Common myeloid progenitor, CD34-positive (primary cell): ENCODE measurements at regions of chr5 and their contacts with region 1.

Region 1: DNA sequence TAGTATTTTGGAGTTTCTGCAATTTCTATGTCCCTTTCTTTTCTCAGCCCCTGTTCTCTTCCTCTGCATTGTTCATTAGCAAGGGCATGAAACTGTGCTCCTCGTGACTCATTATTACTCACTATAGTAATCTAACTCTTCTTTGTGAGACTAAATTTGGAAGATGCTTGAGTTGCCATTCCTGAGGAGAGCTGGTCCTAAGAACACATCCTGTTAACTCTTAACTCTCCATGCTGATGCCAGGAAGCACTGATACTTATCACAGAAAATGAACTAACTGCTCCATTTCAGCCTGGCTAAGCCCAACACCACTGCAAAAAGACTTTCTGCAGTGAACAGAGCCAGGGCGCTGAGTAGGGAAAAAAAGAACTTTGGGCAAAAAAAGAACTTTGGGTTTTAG is 10.6 kb upstream of the CSNK1A1 start:
- DNase-seq: peak in 1 of 3 donors; percentile 18
- H3K4me3 ChIP-seq: no peak overlapping the region
- H3K27ac ChIP-seq: no peak overlapping the region
- H3K4me1 ChIP-seq: peaks cover 0 to 10% (median 0%) of the 10 kb centered on the region in 4 experiments
- H3K27me3 ChIP-seq: no peaks in the 10 kb centered on the region

Region 2: DNA sequence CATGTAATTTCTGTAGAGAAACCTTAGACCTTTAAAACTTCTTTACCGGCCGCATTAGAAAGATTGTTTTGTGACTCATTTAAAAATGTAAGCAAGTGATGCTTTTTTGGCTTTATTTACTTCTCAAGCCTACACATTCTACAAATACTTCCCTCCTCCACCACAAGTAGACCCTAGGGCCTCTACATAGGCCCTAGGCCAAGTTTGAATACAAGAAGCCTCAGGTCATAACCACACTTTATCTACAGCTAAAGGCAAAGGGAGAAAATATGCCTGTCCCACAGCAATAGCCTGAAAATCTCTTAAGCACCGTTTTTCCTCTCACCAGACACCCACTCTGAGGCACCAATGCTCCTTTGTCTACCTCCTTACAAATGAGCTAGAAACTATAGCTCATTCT is 64.5 kb before region 1 on chr5:
- CTCF ChIA-PET with region 1: no interaction called
- POLR2A ChIA-PET with region 1: no interaction called
- DNase-seq: peak in 1 of 3 donors; percentile 28
- H3K4me3 ChIP-seq: no peak overlapping the region
- H3K27ac ChIP-seq: peak overlapping the region in 1 of 2 experiments; percentile 18
- H3K4me1 ChIP-seq: no peaks in the 10 kb centered on the region
- H3K27me3 ChIP-seq: no peaks in the 10 kb centered on the region

Region 3: DNA sequence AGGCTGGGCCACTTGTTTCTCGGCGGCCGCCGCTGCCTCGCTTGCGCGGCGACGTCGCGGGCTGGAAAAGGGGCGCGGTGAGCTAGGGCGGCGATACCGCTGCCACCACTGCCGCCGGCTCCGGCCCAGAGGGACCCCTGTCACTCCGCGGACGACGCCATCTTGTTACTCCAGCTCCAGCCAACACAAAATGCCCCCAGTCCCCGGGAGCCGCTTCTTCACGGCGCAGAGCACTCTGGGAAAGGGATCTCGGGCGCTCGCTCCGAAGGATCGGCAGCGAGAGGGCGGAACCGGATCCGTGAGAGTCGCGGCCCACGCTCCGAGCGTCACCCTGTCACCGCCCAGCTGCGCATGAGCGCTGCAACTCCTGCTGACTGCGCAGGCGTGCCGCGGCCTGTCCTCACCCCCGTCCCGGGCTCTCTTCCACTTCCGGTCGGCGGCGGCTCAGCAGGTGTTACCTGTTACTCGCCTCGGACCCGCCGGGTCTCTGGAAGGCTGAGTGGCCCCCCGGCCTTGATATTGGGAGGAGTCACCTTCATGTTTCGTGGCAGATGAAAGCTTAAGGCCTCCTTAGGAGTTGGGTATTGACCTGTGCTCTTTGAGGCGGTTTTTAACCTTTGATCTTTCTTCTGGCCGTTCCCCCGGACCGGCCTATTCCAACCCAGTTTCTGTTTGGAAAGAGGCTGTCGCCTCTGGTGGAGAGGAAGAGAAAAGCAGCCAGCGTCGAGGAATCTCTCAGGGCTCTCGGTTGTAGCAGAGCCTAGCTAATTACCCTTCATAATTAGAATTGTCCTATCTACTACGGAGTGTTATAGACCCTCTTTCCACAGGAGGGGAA is 10.4 kb before region 1 on chr5 and contains the start of gene CSNK1A1:
- CTCF ChIA-PET with region 1: interaction called, 15 read pairs
- POLR2A ChIA-PET with region 1: no interaction called
- DNase-seq: peak; percentile 98 to 99 (median 99)
- H3K4me3 ChIP-seq: peak within 1 kb of the TSS; percentile 89 to 100 (median 100)
- H3K27ac ChIP-seq: peak within 1 kb of the TSS; percentile 98 to 99
- H3K4me1 ChIP-seq: peaks cover 14 to 45% (median 26%) of the 10 kb centered on the region in 4 experiments
- H3K27me3 ChIP-seq: no peaks in the 10 kb centered on the region

Region 4: GRCh38 chr5:150036513-150036912 is 474.7 kb after region 1 on chr5:
- CTCF ChIA-PET with region 1: no interaction called
- POLR2A ChIA-PET with region 1: no interaction called
- DNase-seq: no peak
- H3K4me3 ChIP-seq: no peak overlapping the region
- H3K27ac ChIP-seq: no peak overlapping the region
- H3K4me1 ChIP-seq: no peaks in the 10 kb centered on the region
- H3K27me3 ChIP-seq: no peaks in the 10 kb centered on the region